Naive thymus-derived CD4-positive, alpha-beta T cell (primary cell): ENCODE measurements at regions of chr1 and their contacts with region 1.

Region 1: GRCh38 chr1:184051485-184052193 is at the start of gene TSEN15:
- DNase-seq: peak; percentile 54 to 75 (median 68)
- ATAC-seq: peak; percentile 98
- H3K4me3 ChIP-seq: peak within 1 kb of the TSS; percentile 87
- H3K4me3 Mint-ChIP-seq: peak within 1 kb of the TSS; percentile 91 to 99 (median 98)
- H3K27ac ChIP-seq: peak within 1 kb of the TSS; percentile 77
- H3K27ac Mint-ChIP-seq: peak within 1 kb of the TSS; percentile 89 to 99 (median 95)
- H3K4me1 ChIP-seq: peaks cover 19 to 23% of the 10 kb centered on the region in 2 donors
- H3K4me1 Mint-ChIP-seq: peaks cover 18 to 56% (median 45%) of the 10 kb centered on the region in 7 donors
- H3K27me3 ChIP-seq: peaks cover 0 to 3% of the 10 kb centered on the region in 2 donors
- H3K27me3 Mint-ChIP-seq: peaks cover 13 to 33% (median 20%) of the 10 kb centered on the region in 5 donors
- total RNA-seq, gene TSEN15: 12.7 to 48.9 (median 31.1) TPM

Region 2: DNA sequence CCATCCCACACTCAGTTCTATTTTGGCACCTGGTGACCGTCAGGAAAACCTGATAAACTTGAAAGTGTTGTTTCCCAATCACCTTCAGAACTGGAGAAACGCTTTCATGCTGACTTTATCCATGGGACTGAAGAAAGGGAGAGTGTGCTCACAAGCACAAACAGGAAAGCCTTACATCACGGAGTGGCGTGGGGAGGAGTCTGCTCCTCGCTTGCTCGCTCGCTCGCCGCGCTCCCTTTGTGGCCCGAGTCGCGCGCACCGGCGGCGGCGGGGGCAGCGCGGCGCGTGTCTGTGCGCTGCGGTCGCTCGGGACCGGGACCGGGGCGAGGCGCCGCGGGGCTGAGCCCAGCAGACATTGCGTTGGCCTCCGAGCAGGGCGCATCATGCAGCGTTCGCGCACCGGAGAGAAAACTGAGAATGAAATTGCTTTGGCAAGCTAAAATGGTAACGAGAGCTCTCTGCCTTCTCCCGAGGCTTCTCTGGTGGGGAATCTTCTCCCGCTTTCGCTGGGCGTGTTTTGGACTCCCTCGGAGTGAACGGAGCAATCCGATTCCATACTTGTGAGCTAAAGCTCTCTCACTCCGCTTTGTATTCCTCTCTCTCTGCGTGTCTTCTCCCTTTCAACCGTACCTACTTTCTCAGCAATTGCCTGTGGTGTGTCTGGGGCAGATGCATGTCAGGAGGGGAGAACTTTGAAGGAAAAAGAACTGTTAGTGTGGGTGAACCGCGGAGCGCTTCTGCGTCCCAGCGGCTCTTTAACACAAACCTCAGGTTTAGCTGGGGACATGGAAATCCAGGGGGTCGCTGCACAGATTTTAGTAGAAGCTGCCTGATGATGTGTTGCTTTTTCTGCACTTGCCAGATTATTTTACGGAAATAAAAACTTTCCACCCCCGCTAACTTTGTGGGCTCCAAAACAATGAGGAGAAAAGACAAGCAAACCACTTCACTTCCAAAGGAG is 246.5 kb before region 1 on chr1 and contains the start of gene RGL1:
- CTCF ChIA-PET with region 1: no interaction called
- POLR2A ChIA-PET with region 1: no interaction called
- intact Hi-C with region 1: loop called in 1 of 2 experiments (anchors 5 kb)
- DNase-seq: peak in 7 of 9 donors; percentile 10 to 43 (median 14)
- ATAC-seq: peak; percentile 77
- H3K4me3 ChIP-seq: peak within 1 kb of the TSS; percentile 55
- H3K4me3 Mint-ChIP-seq: peak within 1 kb of the TSS; percentile 84 to 98 (median 89)
- H3K27ac ChIP-seq: no peak within 1 kb of the TSS
- H3K27ac Mint-ChIP-seq: peak within 1 kb of the TSS in 4 of 9 donors; percentile 19 to 55 (median 36)
- H3K4me1 ChIP-seq: peaks cover 0 to 5% of the 10 kb centered on the region in 2 donors
- H3K4me1 Mint-ChIP-seq: peaks cover 10 to 20% (median 17%) of the 10 kb centered on the region in 7 donors
- H3K27me3 ChIP-seq: no peaks in the 10 kb centered on the region
- H3K27me3 Mint-ChIP-seq: peaks cover 5 to 25% (median 15%) of the 10 kb centered on the region in 5 donors
- total RNA-seq, gene RGL1: 0.98 to 6.2 (median 4.0) TPM

Region 3: DNA sequence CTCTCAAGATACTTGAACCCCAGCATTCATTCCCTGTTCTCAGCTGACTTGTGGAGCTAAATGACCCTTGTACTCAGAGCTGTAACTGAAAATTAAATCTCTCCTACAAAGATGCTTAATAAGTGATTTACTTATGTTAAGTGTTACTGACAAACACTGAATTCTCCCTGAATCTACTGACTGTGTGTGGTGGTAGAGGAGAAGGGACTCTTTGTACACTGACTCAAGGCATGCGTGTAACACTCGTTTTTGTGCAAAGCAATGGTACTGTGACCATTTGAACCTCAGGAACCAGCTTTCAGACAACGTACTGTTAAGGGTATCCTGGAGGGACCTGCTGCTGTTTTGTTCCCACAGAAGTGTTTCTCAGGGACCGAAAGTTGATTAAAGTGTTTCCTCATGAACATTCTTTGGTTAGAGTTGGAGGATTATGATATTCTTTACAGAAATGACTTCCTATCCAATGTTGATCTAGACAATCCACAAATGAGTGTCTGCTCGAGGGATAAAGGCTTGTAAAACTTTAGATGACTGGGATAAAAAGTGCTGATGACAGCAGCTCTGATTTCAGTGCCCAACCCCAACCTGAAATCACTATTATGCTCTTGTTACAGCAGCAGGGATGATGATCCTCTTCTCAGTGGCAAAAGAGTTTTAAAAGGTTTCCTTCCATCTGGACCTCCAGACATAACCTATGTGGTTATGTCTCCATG is 233.9 kb before region 1 on chr1:
- CTCF ChIA-PET with region 1: no interaction called
- POLR2A ChIA-PET with region 1: no interaction called
- intact Hi-C with region 1: no loop called
- DNase-seq: no peak
- ATAC-seq: no peak
- H3K4me3 ChIP-seq: no peak overlapping the region
- H3K4me3 Mint-ChIP-seq: no peak overlapping the region
- H3K27ac ChIP-seq: no peak overlapping the region
- H3K27ac Mint-ChIP-seq: no peak overlapping the region
- H3K4me1 ChIP-seq: no peaks in the 10 kb centered on the region
- H3K4me1 Mint-ChIP-seq: peaks cover 0 to 11% (median 3%) of the 10 kb centered on the region in 7 donors
- H3K27me3 ChIP-seq: no peaks in the 10 kb centered on the region
- H3K27me3 Mint-ChIP-seq: no peaks in the 10 kb centered on the region

Region 4: GRCh38 chr1:184036517-184036949 is 15.1 kb before region 1 on chr1:
- CTCF ChIA-PET with region 1: no interaction called
- POLR2A ChIA-PET with region 1: no interaction called
- intact Hi-C with region 1: loop called (anchors 1 kb)
- DNase-seq: peak in 3 of 9 donors; percentile 5 to 24 (median 6)
- ATAC-seq: peak; percentile 30
- H3K4me3 ChIP-seq: peak overlapping the region; percentile 47
- H3K4me3 Mint-ChIP-seq: peak overlapping the region; percentile 35 to 75 (median 64)
- H3K27ac ChIP-seq: no peak overlapping the region
- H3K27ac Mint-ChIP-seq: no peak overlapping the region
- H3K4me1 ChIP-seq: peaks cover 6 to 18% of the 10 kb centered on the region in 2 donors
- H3K4me1 Mint-ChIP-seq: peaks cover 10 to 18% (median 15%) of the 10 kb centered on the region in 7 donors
- H3K27me3 ChIP-seq: peaks cover 0 to 3% of the 10 kb centered on the region in 2 donors
- H3K27me3 Mint-ChIP-seq: peaks cover 62 to 83% (median 70%) of the 10 kb centered on the region in 5 donors

Region 5: GRCh38 chr1:184088037-184088436 is 36.4 kb after region 1 on chr1:
- CTCF ChIA-PET with region 1: no interaction called
- POLR2A ChIA-PET with region 1: no interaction called
- intact Hi-C with region 1: no loop called
- DNase-seq: no peak
- ATAC-seq: no peak
- H3K4me3 ChIP-seq: no peak overlapping the region
- H3K4me3 Mint-ChIP-seq: no peak overlapping the region
- H3K27ac ChIP-seq: no peak overlapping the region
- H3K27ac Mint-ChIP-seq: no peak overlapping the region
- H3K4me1 ChIP-seq: no peaks in the 10 kb centered on the region
- H3K4me1 Mint-ChIP-seq: no peaks in the 10 kb centered on the region
- H3K27me3 ChIP-seq: no peaks in the 10 kb centered on the region
- H3K27me3 Mint-ChIP-seq: no peaks in the 10 kb centered on the region

Region 6: DNA sequence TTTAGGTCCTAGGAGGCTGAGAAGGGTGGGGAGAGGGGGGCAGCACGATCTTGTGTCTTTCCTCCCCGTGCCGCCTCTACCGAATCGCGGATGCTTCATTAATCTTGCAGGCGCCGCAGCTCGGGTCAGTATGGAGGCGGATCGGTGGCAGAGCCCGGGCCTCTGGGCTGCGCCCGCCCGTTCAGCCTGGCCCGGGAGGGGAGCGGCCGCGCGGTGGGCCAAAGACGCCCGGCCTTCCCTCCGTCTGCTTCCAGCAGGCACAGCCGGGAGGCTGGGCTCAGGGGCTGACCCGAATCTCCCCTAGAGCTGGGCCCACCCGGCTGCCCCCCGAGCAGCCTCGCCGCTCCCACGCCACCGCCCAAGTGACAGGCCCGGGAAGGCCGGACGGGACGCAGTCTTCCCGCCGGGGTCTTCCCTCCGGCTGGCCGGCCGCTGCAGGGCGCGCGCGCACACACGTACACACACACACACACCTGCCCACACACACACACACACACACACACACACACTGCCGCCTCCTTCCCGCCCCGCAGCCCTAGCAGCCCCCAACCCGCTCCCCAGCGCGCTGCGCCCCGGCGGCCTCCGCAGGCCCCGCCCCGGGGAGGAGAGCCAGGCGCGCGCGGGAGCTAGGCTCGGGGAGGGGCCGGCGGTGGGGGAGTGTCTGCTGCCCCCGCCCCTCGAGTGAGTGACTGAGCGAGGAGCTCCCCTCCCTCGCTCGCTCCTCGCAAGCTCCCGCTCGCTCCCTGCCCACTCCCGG is 334.9 kb after region 1 on chr1 and contains the start of gene C1orf21:
- CTCF ChIA-PET with region 1: no interaction called
- POLR2A ChIA-PET with region 1: no interaction called
- intact Hi-C with region 1: loop called in 1 of 2 experiments (anchors 5 kb)
- DNase-seq: peak in 8 of 9 donors; percentile 11 to 87 (median 37)
- ATAC-seq: peak; percentile 86
- H3K4me3 ChIP-seq: peak within 1 kb of the TSS; percentile 56
- H3K4me3 Mint-ChIP-seq: peak within 1 kb of the TSS; percentile 67 to 90 (median 82)
- H3K27ac ChIP-seq: no peak within 1 kb of the TSS
- H3K27ac Mint-ChIP-seq: peak within 1 kb of the TSS in 2 of 9 donors; percentile 41 to 59
- H3K4me1 ChIP-seq: no peaks in the 10 kb centered on the region
- H3K4me1 Mint-ChIP-seq: peaks cover 8 to 27% (median 22%) of the 10 kb centered on the region in 7 donors
- H3K27me3 ChIP-seq: peaks cover 0 to 3% of the 10 kb centered on the region in 2 donors
- H3K27me3 Mint-ChIP-seq: peaks cover 51 to 85% (median 54%) of the 10 kb centered on the region in 5 donors
- total RNA-seq, gene C1orf21: 0.46 to 8.5 (median 1.7) TPM